ENCODE measurements at regions of chr11 and their contacts with region 1.

Region 1: GRCh38 chr11:81644239-81644840 is 1089.3 kb downstream of the FAM181B start:
- DNase-seq: peak; percentile 90
- H3K4me3 ChIP-seq: no peak overlapping the region
- H3K27ac ChIP-seq: no peak overlapping the region
- H3K4me1 ChIP-seq: peaks cover 11% of the 10 kb centered on the region
- H3K27me3 ChIP-seq: no peaks in the 10 kb centered on the region
- CTCF ChIP-seq: peak; percentile 90

Region 2: GRCh38 chr11:81548123-81548522 is 96.2 kb before region 1 on chr11:
- CTCF ChIA-PET with region 1: no interaction called
- POLR2A ChIA-PET with region 1: interaction called, 10 read pairs
- intact Hi-C with region 1: no loop called
- DNase-seq: no peak
- H3K4me3 ChIP-seq: no peak overlapping the region
- H3K27ac ChIP-seq: no peak overlapping the region
- H3K4me1 ChIP-seq: no peaks in the 10 kb centered on the region
- H3K27me3 ChIP-seq: no peaks in the 10 kb centered on the region
- CTCF ChIP-seq: no peak

Region 3: GRCh38 chr11:81772166-81772565 is 127.8 kb after region 1 on chr11:
- CTCF ChIA-PET with region 1: no interaction called
- POLR2A ChIA-PET with region 1: no interaction called
- intact Hi-C with region 1: loop called (anchors 5 kb)
- DNase-seq: no peak
- H3K4me3 ChIP-seq: no peak overlapping the region
- H3K27ac ChIP-seq: no peak overlapping the region
- H3K4me1 ChIP-seq: peaks cover 8% of the 10 kb centered on the region
- H3K27me3 ChIP-seq: no peaks in the 10 kb centered on the region
- CTCF ChIP-seq: no peak

Region 4: DNA sequence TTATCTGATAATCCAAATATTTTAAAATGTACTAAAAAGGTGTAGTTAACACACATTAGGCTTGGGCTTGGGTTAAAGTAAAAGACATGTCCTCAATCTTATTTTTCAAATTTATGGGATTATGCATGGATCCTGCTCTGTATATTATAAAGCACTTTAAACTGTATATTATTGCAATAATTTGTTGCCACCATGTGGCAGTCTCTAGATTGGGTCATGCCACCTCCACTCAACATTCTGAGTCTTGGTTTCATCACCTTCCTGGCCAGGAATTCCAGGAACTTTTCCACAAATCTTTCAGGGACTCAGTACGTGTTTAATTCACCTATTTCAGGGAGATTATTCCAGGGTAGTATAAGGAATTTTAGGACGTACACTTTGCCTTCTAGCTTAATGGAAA is 393.8 kb after region 1 on chr11:
- CTCF ChIA-PET with region 1: no interaction called
- POLR2A ChIA-PET with region 1: no interaction called
- intact Hi-C with region 1: loop called (anchors 10 kb)
- DNase-seq: no peak
- H3K4me3 ChIP-seq: no peak overlapping the region
- H3K27ac ChIP-seq: no peak overlapping the region
- H3K4me1 ChIP-seq: no peaks in the 10 kb centered on the region
- H3K27me3 ChIP-seq: no peaks in the 10 kb centered on the region
- CTCF ChIP-seq: peak; percentile 48

Region 5: DNA sequence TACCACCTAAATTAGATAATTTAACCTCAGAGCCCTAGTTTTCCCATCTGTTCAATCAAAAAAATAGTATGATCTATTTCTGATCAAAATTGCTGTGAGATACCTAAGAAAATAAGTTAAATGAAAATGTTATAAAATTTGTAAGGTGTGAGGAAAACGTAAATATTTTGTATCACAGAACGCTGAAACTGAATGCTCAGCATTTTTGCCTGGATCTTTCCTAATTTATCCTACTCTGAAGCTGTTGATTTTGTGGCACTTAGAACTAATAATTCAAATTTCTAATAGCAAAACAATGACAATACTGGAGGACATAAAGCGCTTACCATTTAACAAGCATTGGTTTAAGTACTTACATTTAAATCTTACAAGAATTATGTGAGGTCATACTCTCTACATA is 415.2 kb after region 1 on chr11:
- CTCF ChIA-PET with region 1: no interaction called
- POLR2A ChIA-PET with region 1: no interaction called
- intact Hi-C with region 1: no loop called
- DNase-seq: no peak
- H3K4me3 ChIP-seq: no peak overlapping the region
- H3K27ac ChIP-seq: no peak overlapping the region
- H3K4me1 ChIP-seq: no peaks in the 10 kb centered on the region
- H3K27me3 ChIP-seq: no peaks in the 10 kb centered on the region
- CTCF ChIP-seq: no peak

Region 6: GRCh38 chr11:82229341-82229740 is 585.0 kb after region 1 on chr11:
- CTCF ChIA-PET with region 1: interaction called, 3 read pairs
- POLR2A ChIA-PET with region 1: no interaction called
- intact Hi-C with region 1: loop called (anchors 1 kb)
- DNase-seq: peak; percentile 58
- H3K4me3 ChIP-seq: no peak overlapping the region
- H3K27ac ChIP-seq: no peak overlapping the region
- H3K4me1 ChIP-seq: no peaks in the 10 kb centered on the region
- H3K27me3 ChIP-seq: no peaks in the 10 kb centered on the region
- CTCF ChIP-seq: peak; percentile 71

Region 7: DNA sequence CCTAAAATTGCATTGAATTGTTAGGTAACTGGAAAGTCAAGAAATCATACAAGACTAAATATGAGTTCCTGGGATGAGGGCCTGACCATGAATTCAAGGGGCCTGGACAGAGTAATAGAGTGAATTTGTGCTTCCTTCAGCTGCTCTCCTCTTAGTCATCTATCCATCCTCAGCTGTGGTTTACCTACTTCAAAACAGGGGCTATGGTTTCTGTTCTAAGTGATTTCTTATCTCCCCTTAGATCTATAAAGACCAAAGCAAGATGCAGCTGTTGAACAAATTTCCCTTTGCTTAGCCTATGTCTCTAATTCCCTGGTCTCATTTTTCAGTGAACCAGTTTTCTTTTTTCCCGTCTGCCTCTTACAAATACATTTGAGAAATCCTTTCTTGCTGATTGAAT is 660.8 kb after region 1 on chr11:
- CTCF ChIA-PET with region 1: no interaction called
- POLR2A ChIA-PET with region 1: no interaction called
- intact Hi-C with region 1: no loop called
- DNase-seq: no peak
- H3K4me3 ChIP-seq: no peak overlapping the region
- H3K27ac ChIP-seq: no peak overlapping the region
- H3K4me1 ChIP-seq: no peaks in the 10 kb centered on the region
- H3K27me3 ChIP-seq: no peaks in the 10 kb centered on the region
- CTCF ChIP-seq: no peak

Measured in A673 (cell line).